ENCODE measurements at regions of chr9 and their contacts with region 1.

Region 1: GRCh38 chr9:97900738-97901565 is 21.3 kb downstream of the TRMO start:
- DNase-seq: no peak
- H3K4me3 ChIP-seq: no peak overlapping the region
- H3K27ac ChIP-seq: no peak overlapping the region
- H3K4me1 ChIP-seq: no peaks in the 10 kb centered on the region
- H3K27me3 ChIP-seq: no peaks in the 10 kb centered on the region
- CTCF ChIP-seq: peak in 2 of 3 experiments; percentile 64 to 79; a peak in 3 of 4 replicates
- EP300 ChIP-seq: no peak
- POLR2A ChIP-seq: no peak
- RAD21 ChIP-seq: peak; percentile 67 to 75

Region 2: DNA sequence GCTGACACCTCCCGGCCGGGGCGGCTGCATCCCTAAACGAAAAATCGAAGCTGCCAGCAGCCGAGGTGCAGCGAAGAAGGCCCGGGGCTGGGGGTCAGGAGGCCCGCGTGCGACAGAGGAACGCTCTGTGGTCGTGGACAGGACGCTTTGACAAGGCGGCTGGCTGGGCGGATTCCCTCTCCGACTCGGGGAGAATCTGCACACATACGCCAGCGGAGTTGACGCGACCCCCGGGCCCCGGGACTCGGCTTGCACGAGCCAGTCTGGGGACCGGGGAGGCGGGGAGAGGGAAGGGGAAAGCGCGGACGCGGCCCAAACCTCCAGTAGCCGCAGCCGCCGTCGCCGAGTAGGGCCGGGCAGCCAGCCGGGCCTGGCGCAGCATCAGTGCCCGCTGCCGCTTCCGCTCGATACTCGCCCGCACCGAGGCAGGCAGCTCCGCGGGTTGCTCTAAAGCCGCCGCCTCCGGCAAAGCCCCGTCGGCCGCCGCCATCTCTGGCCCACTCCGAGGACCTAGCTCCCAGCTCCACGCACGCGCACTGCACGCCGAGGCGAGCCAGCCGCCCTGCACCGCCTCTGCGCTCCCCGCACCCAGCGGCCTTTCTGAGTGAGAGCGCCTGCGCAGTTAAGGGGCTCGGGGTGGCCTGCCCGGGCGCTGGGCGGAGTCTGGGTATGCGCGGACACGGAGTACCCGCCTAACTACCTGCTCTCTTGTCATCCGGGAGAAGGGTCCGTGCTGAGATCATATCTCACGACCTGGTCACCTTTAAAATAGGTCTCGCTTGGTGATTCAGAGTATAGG is 203.9 kb before region 1 on chr9 and contains the start of gene XPA:
- CTCF ChIA-PET with region 1: interaction called, 17 read pairs
- POLR2A ChIA-PET with region 1: no interaction called
- DNase-seq: peak; percentile 70 to 96
- H3K4me3 ChIP-seq: peak within 1 kb of the TSS; percentile 64 to 80 (median 74)
- H3K27ac ChIP-seq: no peak within 1 kb of the TSS; the same call in 1 of the 2 replicates
- H3K4me1 ChIP-seq: peaks cover 0 to 4% (median 1%) of the 10 kb centered on the region in 4 experiments; a peak in 2 of 7 replicates
- H3K27me3 ChIP-seq: peaks cover 0 to 15% (median 11%) of the 10 kb centered on the region in 4 experiments; a peak in 6 of 7 replicates
- CTCF ChIP-seq: no peak
- EP300 ChIP-seq: no peak
- POLR2A ChIP-seq: peak; percentile 60 to 89
- RAD21 ChIP-seq: no peak
- total RNA-seq, gene XPA: 2.6 and 3.1 TPM in 2 replicates

Region 3: GRCh38 chr9:97710356-97711222 is 190.4 kb before region 1 on chr9:
- CTCF ChIA-PET with region 1: interaction called, 14 read pairs
- POLR2A ChIA-PET with region 1: no interaction called
- DNase-seq: peak in 1 of 2 experiments; percentile 58
- H3K4me3 ChIP-seq: peak overlapping the region in 2 of 4 experiments; percentile 17 to 33; a peak in 1 of 8 replicates
- H3K27ac ChIP-seq: no peak overlapping the region
- H3K4me1 ChIP-seq: peaks cover 0 to 9% (median 1%) of the 10 kb centered on the region in 4 experiments; a peak in 3 of 7 replicates
- H3K27me3 ChIP-seq: 0 out of 7 replicates have a peak, but pooled peaks cover 0 to 1% (median 0%) of the 10 kb centered on the region in 4 experiments
- CTCF ChIP-seq: peak; percentile 39 to 80 (median 74)
- EP300 ChIP-seq: no peak
- POLR2A ChIP-seq: no peak
- RAD21 ChIP-seq: peak; percentile 88 to 93

Region 4: DNA sequence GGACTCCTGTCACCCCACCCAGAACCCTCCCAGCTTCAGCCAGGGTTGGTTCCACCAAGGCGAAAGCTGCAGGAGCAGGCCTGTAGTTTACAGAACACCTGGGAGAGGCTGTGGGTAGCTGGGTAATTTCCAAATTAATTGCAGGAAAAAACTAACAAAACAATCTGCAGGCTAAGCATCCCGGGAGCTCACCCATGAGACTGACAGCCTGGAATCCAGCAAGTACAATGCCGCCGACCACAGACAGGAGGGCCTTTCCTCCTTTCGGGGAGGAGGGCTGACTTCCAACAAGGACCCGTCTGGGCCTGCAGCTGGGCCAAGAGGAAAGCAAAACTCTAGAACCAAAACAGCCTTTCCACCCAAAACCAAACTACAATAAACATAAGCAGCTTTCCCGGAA is 37.6 kb before region 1 on chr9:
- CTCF ChIA-PET with region 1: interaction called, 23 read pairs
- POLR2A ChIA-PET with region 1: no interaction called
- DNase-seq: no peak
- H3K4me3 ChIP-seq: no peak overlapping the region
- H3K27ac ChIP-seq: no peak overlapping the region
- H3K4me1 ChIP-seq: peaks cover 0 to 5% (median under 1%) of the 10 kb centered on the region in 4 experiments; a peak in 5 of 7 replicates
- H3K27me3 ChIP-seq: peaks cover 26 to 44% (median 41%) of the 10 kb centered on the region in 4 experiments
- CTCF ChIP-seq: no peak
- EP300 ChIP-seq: no peak
- POLR2A ChIP-seq: no peak
- RAD21 ChIP-seq: no peak

Region 5: DNA sequence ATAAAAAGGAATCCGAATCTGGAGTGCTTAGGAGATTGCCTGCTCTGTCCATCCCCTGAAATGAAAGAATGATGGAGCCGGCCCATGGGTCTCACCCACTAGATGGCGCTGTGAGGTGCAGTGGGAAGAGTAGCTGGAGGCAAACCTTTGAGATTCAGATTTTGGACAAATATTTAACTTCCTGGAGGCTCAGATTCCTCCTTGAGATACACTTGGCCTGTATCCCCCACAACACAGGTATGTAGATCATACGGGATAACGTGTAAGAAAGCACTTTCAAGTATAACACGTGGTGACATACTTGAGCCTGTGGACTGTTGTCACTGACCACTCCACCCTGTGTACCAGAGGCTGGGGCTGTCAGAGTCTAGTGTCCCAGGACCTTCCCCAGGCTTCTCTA is 10.9 kb before region 1 on chr9:
- CTCF ChIA-PET with region 1: interaction called, 110 read pairs
- POLR2A ChIA-PET with region 1: no interaction called
- DNase-seq: peak in 1 of 2 experiments; percentile 91
- H3K4me3 ChIP-seq: no peak overlapping the region
- H3K27ac ChIP-seq: no peak overlapping the region
- H3K4me1 ChIP-seq: peaks cover 0 to 7% (median 0%) of the 10 kb centered on the region in 4 experiments; a peak in 2 of 7 replicates
- H3K27me3 ChIP-seq: peaks cover 0 to 3% (median under 1%) of the 10 kb centered on the region in 4 experiments; a peak in 3 of 7 replicates
- CTCF ChIP-seq: peak; percentile 69 to 84 (median 80)
- EP300 ChIP-seq: no peak
- POLR2A ChIP-seq: no peak
- RAD21 ChIP-seq: peak; percentile 42 to 55

Measured in H1 (cell line).